GM10248 (cell line): ENCODE measurements at regions of chr13 and their contacts with region 1.

Region 1: DNA sequence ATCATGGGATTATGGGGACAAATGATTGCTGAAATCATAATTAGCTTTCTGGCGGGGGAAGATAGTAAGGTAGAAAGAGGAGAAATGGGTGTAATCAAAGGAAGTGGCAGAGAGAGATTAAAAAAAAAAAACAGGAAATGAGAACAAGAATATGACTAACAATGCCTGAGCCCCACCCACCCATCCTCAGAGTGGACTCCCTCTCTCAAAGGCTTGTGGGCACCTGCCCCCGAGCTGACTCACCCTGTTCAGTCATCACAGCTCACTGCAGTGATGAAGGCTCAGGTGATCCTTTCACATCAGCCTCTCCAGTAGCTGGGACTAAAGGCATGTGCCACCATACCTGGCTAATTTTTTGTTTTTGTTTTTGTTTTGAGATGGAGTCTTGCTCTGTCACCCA is 26.4 kb upstream of the TPT1 start:
- DNase-seq: peak; percentile 87
- CTCF ChIP-seq: no peak

Region 2: DNA sequence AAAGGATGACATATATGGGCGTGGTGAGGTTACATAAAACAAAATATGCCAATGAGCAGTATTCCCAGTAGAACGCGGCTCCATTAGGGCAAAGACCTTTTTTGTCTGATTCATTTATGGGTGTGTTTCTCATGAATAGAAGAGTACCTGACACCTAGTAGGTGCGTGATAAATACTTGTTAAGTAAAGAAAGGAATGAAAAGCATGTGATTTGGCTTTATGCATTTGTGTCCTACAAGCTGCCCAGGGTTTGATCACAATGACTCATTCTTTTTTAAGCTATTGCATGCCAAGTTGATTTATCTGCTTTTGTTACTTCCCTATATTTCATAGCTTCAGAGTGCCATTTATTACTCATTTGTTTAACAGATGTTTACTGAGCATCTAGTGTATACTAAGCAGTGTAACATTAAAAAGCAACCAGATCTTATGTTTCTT is 147.4 kb before region 1 on chr13:
- CTCF ChIA-PET with region 1: no interaction called
- POLR2A ChIA-PET with region 1: no interaction called
- DNase-seq: no peak
- CTCF ChIP-seq: no peak

Region 3: DNA sequence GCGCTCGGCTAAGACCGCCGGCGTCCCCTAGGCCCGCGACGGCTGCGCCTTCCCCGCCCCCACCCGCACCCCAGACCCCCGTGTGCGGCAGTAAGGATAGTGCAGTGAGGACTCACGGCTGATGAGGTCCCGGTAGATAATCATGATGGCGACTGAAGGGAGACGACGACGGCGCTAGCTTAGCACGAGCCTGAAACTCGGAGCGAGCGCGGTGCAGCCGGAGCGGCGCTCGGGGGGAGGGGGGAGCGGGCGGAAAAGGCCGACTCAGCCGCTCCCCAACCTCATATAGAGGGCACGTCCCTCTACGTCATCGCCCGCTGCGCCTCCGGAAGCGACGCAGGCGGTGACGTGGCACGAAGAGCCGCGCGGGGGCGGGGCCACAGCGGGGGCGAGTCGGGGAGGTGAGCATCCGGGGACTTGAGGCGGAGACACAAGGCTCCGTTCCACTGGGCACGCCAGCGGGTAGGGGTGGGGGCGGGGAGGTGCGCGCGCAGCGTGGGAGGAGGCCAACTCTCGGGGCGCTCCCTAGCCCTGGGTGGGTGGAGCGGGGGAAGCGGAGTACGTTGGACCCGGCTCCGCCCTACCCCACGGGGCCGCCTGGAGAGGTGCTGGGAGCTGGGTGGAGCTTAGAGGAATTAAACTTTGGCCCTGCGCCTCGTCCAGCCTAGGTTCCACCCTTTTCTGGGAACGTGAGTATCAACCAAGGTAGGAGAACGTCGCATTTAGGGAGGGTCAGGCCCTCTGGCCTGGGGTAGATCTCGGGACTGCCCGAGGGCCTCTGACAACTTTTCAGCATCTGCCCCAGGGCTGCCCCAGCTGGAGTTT is 26.2 kb before region 1 on chr13 and contains the start of gene TPT1:
- CTCF ChIA-PET with region 1: interaction called, 19 read pairs
- POLR2A ChIA-PET with region 1: no interaction called
- DNase-seq: peak; percentile 99
- CTCF ChIP-seq: no peak

Region 4: DNA sequence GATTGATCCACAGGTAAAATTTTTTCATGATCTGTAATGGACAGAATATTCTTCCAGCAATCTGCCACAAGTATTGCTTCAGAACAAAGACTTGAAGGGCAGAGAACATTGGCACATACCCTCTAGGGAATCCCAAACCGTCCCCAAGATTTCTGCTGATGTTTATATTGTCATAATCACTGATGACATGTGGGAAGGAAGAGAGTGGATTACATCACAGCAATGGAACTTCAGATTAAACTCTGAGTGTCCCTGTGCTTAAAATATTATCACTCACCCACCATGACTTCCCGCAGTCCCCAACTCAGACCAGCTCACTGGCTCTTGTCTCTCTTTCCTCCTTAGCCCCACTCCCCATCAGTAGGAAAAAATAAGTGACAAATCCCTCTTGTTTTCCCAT is 17.9 kb before region 1 on chr13:
- CTCF ChIA-PET with region 1: interaction called, 19 read pairs
- POLR2A ChIA-PET with region 1: no interaction called
- DNase-seq: no peak
- CTCF ChIP-seq: no peak

Region 5: GRCh38 chr13:45356966-45357672 is 10.2 kb before region 1 on chr13:
- CTCF ChIA-PET with region 1: interaction called, 21 read pairs
- POLR2A ChIA-PET with region 1: no interaction called
- DNase-seq: no peak
- CTCF ChIP-seq: no peak

Region 6: DNA sequence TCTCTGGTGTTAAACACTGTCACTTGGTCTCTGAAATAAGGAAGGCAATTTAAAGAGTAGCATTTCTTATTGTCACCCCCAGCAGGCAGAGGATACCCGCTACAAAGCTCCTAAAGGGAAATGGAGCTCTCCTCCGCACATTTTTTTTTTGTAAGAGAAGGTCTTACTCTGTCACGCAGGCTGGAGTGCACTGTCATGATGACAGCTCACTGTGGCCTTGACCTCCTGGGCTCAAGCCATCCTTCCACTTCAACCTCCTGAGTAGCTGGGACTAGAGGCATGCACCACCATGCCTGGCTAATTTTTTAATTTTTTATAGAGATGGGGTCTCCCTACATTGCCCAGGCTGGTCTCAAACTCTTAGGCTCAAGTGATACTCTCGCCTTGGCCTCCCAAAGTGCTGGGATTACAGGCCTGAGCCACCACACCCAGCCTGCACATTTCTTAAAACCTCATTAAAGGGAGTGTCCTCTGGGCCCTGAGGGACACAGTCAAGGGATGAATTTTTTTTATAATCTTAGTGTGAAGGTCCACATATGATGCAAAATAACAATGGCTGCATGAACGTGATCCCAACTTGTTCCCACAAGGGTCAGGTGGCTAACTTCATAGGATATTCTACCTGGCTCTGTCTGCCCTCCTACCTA is 18.7 kb after region 1 on chr13:
- CTCF ChIA-PET with region 1: interaction called, 29 read pairs
- POLR2A ChIA-PET with region 1: interaction called, 7 read pairs
- DNase-seq: no peak
- CTCF ChIP-seq: no peak

Region 7: DNA sequence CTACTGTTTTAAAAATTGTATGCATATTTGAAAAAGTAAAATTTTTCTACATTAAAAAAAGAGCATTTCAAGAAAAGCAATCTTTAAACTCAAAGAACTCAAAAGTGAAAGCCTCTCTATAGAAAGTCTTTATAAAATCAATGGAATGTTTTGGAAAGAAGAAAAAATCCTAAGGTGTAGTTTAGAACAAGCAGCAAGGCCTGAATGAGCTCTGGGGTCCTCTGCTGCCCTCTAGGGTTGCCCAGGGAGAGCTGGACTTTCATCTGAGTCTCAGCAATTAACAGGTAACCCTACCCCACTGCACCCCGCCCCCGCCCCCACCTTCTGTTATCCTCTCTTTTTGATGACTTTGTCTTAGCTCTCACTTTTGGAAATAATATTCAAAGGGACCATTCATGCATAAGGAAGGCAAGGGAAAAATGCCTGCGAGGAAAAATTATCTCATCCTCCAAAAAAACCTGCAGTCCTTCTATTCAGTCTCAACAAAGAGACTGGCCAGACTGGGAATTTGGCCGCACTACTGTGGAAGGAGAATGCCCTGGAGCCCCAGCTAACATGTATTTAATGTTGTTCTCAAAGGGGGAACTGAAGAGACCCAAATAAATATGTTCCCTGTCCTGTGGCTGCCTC is 26.7 kb after region 1 on chr13:
- CTCF ChIA-PET with region 1: interaction called, 35 read pairs
- POLR2A ChIA-PET with region 1: interaction called, 7 read pairs
- DNase-seq: peak; percentile 59
- CTCF ChIP-seq: peak; percentile 56

Region 8: DNA sequence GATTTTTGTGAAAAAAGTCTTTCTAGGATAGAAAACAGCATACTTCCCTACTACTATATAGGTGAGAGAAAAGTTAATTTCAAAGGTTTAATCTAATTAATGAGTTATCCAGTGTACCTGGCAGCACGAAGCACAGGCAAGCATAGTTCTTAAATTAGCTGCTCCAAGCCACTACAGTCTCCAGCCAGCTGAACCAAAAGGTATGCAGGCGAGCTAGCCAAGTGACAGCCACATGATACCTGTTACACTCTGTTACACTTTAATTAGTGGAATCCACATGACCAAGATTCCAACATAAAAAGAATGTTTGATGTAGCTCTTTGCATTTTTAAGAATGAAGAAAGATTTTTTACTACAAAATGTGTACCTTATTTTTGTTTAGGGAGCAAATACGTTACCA is 35.3 kb after region 1 on chr13:
- CTCF ChIA-PET with region 1: interaction called, 15 read pairs
- POLR2A ChIA-PET with region 1: no interaction called
- DNase-seq: no peak
- CTCF ChIP-seq: no peak

Region 9: DNA sequence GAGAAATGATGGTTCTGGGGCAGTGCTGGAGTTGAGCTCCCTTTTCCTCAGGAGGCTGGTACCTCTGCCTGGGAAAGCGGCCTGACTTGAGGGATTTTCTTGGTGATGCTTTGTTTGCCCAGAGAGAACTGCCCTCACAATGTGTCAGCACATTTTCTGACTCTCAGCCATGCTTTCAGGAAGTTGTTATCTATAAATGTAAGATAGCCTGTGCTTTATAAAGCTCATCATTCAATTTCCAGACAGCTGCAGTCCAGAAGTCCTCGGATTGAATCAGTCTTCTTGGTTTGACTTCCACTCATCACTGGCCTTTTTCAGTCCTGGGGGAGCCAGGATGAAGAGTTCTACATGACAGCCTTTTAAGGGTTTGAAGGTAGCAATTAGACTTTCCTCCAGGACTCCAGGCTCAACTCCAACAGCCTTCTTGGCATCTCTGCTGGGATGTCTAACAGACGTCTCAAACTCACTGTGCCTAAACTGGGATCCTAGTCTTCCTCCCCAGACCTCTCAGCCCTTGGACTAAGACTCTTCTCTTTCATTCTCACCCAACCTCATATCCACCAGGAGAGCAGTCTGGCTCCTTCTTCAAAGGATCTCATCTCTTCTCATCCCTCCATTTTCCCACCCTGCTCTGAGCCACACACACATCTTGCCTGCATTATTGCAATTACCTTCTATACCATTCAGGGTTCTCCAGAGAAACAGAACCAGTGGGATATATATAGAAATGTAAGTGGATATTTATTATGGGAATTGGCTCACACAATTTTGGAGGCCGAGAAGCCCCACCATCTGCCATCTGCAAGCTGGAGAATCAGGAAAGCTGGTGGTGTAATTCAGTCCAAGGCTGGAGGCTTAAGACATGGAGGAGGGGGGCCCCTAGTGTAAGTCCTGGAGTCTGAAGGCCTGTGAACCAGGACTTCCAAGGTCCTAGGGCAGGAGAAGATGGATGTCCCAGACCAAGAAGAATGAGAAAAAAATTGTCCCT is 235.1 kb after region 1 on chr13:
- CTCF ChIA-PET with region 1: no interaction called
- POLR2A ChIA-PET with region 1: no interaction called
- DNase-seq: no peak
- CTCF ChIP-seq: no peak